ENCODE measurements at regions of chr14 and their contacts with region 1.

Region 1: GRCh38 chr14:103808403-103809001 is 38.9 kb downstream of the PPP1R13B start:
- DNase-seq: peak; percentile 90
- H3K4me3 Mint-ChIP-seq: no peak overlapping the region
- H3K27ac Mint-ChIP-seq: no peak overlapping the region
- H3K4me1 Mint-ChIP-seq: peaks cover 6% of the 10 kb centered on the region
- H3K27me3 Mint-ChIP-seq: no peaks in the 10 kb centered on the region

Region 2: GRCh38 chr14:103910262-103910935 is 101.9 kb after region 1 on chr14:
- intact Hi-C with region 1: loop called (anchors 1 kb)
- DNase-seq: peak; percentile 91
- H3K4me3 Mint-ChIP-seq: peak overlapping the region; percentile 75
- H3K27ac Mint-ChIP-seq: peak overlapping the region; percentile 35
- H3K4me1 Mint-ChIP-seq: peaks cover 11% of the 10 kb centered on the region
- H3K27me3 Mint-ChIP-seq: peaks cover 2% of the 10 kb centered on the region

Region 3: GRCh38 chr14:103984196-103984595 is 175.7 kb after region 1 on chr14:
- intact Hi-C with region 1: loop called (anchors 1 kb)
- DNase-seq: no peak
- H3K4me3 Mint-ChIP-seq: no peak overlapping the region
- H3K27ac Mint-ChIP-seq: no peak overlapping the region
- H3K4me1 Mint-ChIP-seq: no peaks in the 10 kb centered on the region
- H3K27me3 Mint-ChIP-seq: peaks cover 14% of the 10 kb centered on the region